ENCODE measurements at regions of chr5 and their contacts with region 1.

Region 1: GRCh38 chr5:43105369-43106289 is 15.1 kb upstream of the ZNF131 start:
- DNase-seq: peak; percentile 94
- H3K4me3 Mint-ChIP-seq: peak overlapping the region; percentile 78
- H3K27ac Mint-ChIP-seq: peak overlapping the region; percentile 79
- H3K4me1 Mint-ChIP-seq: peaks cover 12% of the 10 kb centered on the region
- H3K27me3 Mint-ChIP-seq: no peaks in the 10 kb centered on the region
- CTCF ChIP-seq: peak; percentile 99

Region 2: DNA sequence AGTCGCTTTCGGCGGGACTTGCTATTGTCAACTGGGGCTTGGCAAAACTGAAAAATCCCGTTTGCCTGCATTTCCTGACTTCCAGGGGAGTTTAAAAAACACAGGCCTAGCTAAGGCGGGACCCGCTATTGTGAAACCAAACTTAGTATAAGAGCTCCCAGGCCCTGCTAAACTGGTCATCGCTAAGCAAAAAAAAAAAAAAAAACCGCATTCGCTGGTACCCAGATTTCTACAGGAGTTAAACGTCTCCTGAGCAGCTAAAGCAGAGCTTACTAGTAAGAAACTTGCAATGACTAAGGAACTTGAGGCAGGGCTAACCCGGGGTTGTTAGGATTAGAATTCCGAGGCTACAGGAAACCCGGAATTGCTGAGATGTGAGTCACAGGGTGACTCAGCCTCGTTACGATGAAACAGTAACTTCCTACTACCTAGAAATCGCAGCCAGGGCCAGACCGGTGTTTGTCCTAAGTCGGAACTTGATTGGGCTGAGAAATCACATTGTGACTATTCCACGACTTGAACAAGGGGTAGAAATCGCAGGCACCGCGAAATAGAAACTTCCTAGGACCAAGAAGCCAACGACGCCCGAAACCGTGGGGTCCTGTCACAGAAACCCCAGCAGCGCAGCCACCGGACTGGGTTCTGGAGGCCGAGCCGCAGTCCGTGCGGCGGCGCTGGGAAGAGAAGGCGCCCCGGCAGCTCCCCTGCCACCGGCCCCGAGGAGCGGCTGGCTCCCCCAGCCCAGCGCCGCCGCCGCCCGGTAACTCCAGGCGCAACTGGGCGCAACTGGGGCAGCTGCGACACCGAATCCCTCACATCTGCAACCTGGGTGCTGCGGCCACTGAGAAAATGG is 155.0 kb before region 1 on chr5:
- CTCF ChIA-PET with region 1: no interaction called
- POLR2A ChIA-PET with region 1: no interaction called
- intact Hi-C with region 1: loop called (anchors 1 kb)
- DNase-seq: peak; percentile 98
- H3K4me3 Mint-ChIP-seq: peak overlapping the region; percentile 47
- H3K27ac Mint-ChIP-seq: peak overlapping the region; percentile 85
- H3K4me1 Mint-ChIP-seq: no peaks in the 10 kb centered on the region
- H3K27me3 Mint-ChIP-seq: no peaks in the 10 kb centered on the region
- CTCF ChIP-seq: no peak

Region 3: DNA sequence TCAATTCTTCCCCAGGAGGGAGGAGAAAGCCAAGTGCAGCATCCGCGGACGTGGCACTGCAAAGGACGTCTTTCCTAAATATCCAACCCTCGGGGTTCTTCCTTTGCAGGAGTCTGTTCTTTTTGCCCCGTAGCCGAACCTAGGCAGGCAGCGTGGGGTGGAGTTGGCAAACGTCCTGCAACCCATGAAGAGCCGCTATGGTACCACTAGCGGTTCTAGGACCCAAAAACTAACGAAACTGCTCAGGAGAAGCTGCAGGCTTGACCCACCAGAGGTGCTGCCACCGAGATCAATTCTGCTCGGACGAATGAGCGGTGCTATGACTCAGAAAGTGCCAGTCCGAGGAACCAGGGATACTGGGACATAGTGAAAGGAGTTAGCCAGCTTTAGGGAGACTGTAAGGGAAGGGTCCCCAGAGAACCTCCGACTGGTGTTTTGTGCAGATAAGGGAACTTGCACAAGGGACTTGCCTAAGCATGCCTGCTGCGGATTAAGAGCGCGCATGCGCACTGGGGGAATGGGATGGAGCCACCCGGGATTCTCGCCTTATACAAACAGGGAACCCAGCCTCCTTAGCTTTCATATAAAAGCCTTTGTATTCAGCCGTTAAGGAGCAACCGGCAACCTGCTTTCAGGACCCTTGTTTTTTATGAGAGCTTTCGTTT is 98.3 kb before region 1 on chr5:
- CTCF ChIA-PET with region 1: no interaction called
- POLR2A ChIA-PET with region 1: no interaction called
- intact Hi-C with region 1: no loop called
- DNase-seq: peak; percentile 82
- H3K4me3 Mint-ChIP-seq: peak overlapping the region; percentile 76
- H3K27ac Mint-ChIP-seq: peak overlapping the region; percentile 94
- H3K4me1 Mint-ChIP-seq: peaks cover 17% of the 10 kb centered on the region
- H3K27me3 Mint-ChIP-seq: no peaks in the 10 kb centered on the region
- CTCF ChIP-seq: no peak

Region 4: GRCh38 chr5:43066799-43067741 is 38.6 kb before region 1 on chr5:
- CTCF ChIA-PET with region 1: interaction called, 7 read pairs
- POLR2A ChIA-PET with region 1: interaction called, 4 read pairs
- intact Hi-C with region 1: loop called (anchors 1 kb)
- DNase-seq: peak; percentile 91
- H3K4me3 Mint-ChIP-seq: peak overlapping the region; percentile 99
- H3K27ac Mint-ChIP-seq: peak overlapping the region; percentile 93
- H3K4me1 Mint-ChIP-seq: peaks cover 12% of the 10 kb centered on the region
- H3K27me3 Mint-ChIP-seq: no peaks in the 10 kb centered on the region
- CTCF ChIP-seq: no peak

Region 5: DNA sequence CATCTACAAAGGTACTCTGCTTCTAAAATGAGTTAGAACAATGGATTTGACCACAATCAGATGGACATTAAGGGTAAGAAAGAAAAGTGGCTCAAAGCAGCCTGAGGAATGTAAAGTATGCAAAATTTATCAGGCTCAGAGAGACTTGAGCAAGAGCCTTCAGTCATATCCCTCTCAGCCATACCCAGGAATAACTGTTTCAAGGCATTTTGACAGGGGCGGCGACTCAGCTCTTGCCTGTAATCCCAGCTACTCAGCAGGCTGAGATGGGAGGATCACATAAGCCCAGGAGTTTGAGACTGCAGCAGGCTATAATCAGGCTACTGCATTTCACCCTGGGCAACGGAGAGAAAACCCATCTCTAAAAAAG is 26.7 kb before region 1 on chr5:
- CTCF ChIA-PET with region 1: interaction called, 12 read pairs
- POLR2A ChIA-PET with region 1: interaction called, 3 read pairs
- intact Hi-C with region 1: loop called (anchors 1 kb)
- DNase-seq: peak; percentile 54
- H3K4me3 Mint-ChIP-seq: no peak overlapping the region
- H3K27ac Mint-ChIP-seq: no peak overlapping the region
- H3K4me1 Mint-ChIP-seq: peaks cover 28% of the 10 kb centered on the region
- H3K27me3 Mint-ChIP-seq: no peaks in the 10 kb centered on the region
- CTCF ChIP-seq: no peak

Region 6: GRCh38 chr5:43156388-43156787 is 50.8 kb after region 1 on chr5:
- CTCF ChIA-PET with region 1: interaction called, 11 read pairs
- POLR2A ChIA-PET with region 1: no interaction called
- intact Hi-C with region 1: no loop called
- DNase-seq: no peak
- H3K4me3 Mint-ChIP-seq: no peak overlapping the region
- H3K27ac Mint-ChIP-seq: no peak overlapping the region
- H3K4me1 Mint-ChIP-seq: no peaks in the 10 kb centered on the region
- H3K27me3 Mint-ChIP-seq: no peaks in the 10 kb centered on the region
- CTCF ChIP-seq: no peak

Region 7: DNA sequence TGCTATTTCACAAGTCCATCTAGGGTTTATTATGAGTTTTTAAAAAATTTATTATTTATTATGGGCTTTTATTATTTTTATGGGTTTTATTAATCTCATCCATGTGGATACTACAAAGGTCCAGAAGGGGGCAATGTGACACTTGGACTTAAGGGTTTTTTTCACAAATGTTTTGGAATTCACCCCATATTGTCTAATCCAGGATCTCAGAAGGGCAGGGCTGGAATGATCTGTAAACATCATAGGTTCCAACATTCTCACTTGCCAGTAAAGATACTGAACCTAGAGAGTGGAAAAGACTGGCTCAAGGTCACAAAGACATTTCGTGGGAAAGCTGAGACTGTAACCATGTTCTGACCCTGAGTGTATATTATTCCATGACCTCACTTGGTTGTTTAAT is 122.0 kb after region 1 on chr5:
- CTCF ChIA-PET with region 1: interaction called, 3 read pairs
- POLR2A ChIA-PET with region 1: no interaction called
- intact Hi-C with region 1: loop called (anchors 5 kb)
- DNase-seq: peak; percentile 67
- H3K4me3 Mint-ChIP-seq: no peak overlapping the region
- H3K27ac Mint-ChIP-seq: no peak overlapping the region
- H3K4me1 Mint-ChIP-seq: peaks cover 4% of the 10 kb centered on the region
- H3K27me3 Mint-ChIP-seq: no peaks in the 10 kb centered on the region
- CTCF ChIP-seq: peak; percentile 51

Region 8: DNA sequence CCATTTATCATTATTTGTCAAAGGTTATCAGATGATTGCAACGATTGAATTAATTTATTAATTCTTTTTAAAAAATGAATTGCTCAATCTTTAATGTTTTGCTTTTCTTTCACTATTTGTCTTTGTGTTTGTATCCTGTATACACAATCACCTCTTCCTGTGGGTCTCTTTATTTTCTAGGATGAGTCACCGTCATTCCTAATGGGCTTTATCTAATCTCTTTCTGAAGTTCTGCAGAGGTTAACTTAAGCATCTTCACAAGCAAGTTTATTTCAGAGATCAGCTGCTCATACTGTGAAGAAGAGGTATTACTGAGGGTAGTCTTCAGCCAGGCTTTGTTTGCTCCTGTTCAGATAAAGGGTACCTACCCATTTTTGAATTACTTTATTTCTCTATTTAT is 821.3 kb after region 1 on chr5:
- CTCF ChIA-PET with region 1: no interaction called
- POLR2A ChIA-PET with region 1: no interaction called
- intact Hi-C with region 1: no loop called
- DNase-seq: no peak
- H3K4me3 Mint-ChIP-seq: no peak overlapping the region
- H3K27ac Mint-ChIP-seq: no peak overlapping the region
- H3K4me1 Mint-ChIP-seq: no peaks in the 10 kb centered on the region
- H3K27me3 Mint-ChIP-seq: no peaks in the 10 kb centered on the region
- CTCF ChIP-seq: no peak